ENCODE measurements at regions of chr12 and their contacts with region 1.

Region 1: DNA sequence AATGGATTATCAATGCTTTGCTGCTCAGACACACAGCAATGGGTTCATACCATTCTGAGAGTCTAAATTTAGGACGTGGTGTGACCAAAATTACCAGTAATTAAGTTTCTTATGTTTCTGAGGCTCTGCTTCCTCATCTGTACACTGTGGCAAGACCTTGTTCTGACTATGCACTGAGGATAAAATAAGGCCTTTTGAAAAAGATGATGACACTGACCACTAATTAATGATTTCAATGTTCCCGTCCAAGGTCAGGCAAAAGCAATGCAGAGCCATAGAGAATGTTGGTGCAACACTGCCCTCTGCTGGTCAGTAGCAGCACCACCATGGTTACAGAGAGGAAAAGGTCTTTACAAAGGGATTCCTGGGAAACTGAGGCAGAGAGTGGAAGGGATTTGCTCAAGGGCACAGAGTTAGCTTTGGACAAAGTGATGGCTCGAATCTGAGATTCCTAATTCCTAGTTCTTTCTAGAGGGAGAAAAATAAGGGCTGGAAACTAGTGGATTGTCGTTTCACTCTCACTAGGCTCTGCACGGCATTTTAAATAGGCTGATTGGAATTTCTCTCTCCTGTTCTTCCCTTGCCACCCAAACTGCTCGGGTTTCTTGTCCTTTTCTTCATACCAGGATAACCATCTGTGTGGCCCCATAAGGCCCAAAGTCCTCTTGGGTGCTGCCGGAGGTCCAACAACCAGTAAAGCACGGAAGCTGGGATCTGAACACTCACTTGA is 22.3 kb upstream of the P2RX7 start:
- DNase-seq: peak; percentile 31
- ATAC-seq: peak; percentile 89
- H3K4me3 Mint-ChIP-seq: no peak overlapping the region
- H3K27ac Mint-ChIP-seq: no peak overlapping the region
- H3K4me1 Mint-ChIP-seq: peaks cover 4% of the 10 kb centered on the region
- H3K27me3 Mint-ChIP-seq: no peaks in the 10 kb centered on the region
- CTCF ChIP-seq: peak; percentile 50

Region 2: DNA sequence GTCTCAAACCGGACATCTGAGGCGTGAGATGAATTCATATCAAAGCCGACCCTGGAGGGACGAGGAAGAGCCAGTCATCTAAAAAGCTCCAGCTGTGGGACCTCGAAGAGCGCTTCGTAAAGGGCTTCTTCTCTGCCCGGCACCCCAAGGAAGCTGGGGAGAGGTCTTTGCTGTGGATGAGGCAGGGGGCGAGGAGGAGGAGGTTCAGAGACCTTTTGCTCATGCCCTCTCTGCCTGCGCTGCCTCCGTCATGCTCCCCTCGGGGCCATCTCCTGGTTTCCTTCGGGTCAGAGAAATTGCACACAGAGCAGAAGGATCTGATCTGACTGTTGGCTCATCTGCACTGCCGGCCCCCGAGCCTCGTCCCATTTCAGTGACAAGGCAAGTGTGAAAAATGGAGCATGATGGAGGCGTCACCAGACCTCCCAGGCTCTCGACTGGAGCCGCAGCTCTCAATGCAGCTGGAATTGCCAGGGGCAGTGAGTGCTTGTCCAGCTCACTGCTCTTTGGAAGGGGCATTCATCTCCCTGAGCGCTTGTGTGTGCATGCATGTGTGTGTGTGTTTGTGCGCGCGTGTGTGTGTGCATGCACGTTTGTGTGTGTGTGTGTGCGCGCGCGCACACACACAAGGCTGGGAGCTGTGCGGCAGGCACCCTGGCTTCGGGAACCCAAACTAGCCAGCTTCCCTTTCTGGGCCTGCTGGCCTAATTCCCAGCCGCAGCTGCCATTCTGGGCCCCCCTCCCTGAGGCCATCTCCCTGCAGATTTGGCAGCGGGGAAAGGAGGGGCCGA is 460.7 kb before region 1 on chr12:
- CTCF ChIA-PET with region 1: no interaction called
- POLR2A ChIA-PET with region 1: no interaction called
- intact Hi-C with region 1: loop called (anchors 5 kb)
- DNase-seq: no peak
- ATAC-seq: no peak
- H3K4me3 Mint-ChIP-seq: peak overlapping the region; percentile 75
- H3K27ac Mint-ChIP-seq: peak overlapping the region; percentile 44
- H3K4me1 Mint-ChIP-seq: peaks cover 26% of the 10 kb centered on the region
- H3K27me3 Mint-ChIP-seq: peaks cover 48% of the 10 kb centered on the region
- CTCF ChIP-seq: peak; percentile 50

Region 3: DNA sequence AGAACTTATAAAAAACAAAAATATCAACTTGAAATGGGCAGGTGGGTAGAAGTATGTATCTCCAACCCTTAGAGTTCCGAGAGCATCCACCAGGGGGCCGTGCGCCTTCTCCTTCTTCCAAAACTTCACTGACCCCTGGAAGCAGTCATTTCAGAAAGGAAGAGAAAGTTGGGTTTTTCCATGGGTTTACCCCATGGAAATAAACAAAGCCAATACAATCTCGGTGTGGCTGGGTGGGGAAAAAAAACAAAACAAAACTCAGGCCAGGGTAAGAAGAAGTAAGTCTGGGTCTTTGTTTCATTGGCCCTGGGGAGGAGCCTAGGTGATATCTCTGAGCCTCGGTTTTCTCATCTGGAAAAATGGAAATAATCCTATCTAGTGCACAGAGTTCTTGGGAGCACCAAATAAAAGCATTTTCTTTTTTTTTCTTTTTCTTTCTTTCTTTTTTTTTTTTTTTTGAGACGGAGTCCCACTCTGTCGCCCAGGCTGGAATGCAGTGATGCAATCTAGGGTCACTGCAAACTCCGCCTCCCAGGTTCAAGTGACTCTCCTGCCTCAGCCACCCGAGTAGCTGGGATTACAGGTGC is 165.6 kb before region 1 on chr12:
- CTCF ChIA-PET with region 1: interaction called, 4 read pairs
- POLR2A ChIA-PET with region 1: no interaction called
- intact Hi-C with region 1: loop called (anchors 1 kb)
- DNase-seq: peak; percentile 36
- ATAC-seq: peak; percentile 47
- H3K4me3 Mint-ChIP-seq: no peak overlapping the region
- H3K27ac Mint-ChIP-seq: no peak overlapping the region
- H3K4me1 Mint-ChIP-seq: no peaks in the 10 kb centered on the region
- H3K27me3 Mint-ChIP-seq: no peaks in the 10 kb centered on the region
- CTCF ChIP-seq: no peak

Region 4: GRCh38 chr12:121209624-121210572 is 99.5 kb after region 1 on chr12 and contains the start of gene P2RX4:
- CTCF ChIA-PET with region 1: no interaction called
- POLR2A ChIA-PET with region 1: interaction called, 3 read pairs
- intact Hi-C with region 1: loop called (anchors 1 kb)
- DNase-seq: peak; percentile 80
- ATAC-seq: peak; percentile 85
- H3K4me3 Mint-ChIP-seq: peak within 1 kb of the TSS; percentile 83
- H3K27ac Mint-ChIP-seq: peak within 1 kb of the TSS; percentile 85
- H3K4me1 Mint-ChIP-seq: peaks cover 24% of the 10 kb centered on the region
- H3K27me3 Mint-ChIP-seq: no peaks in the 10 kb centered on the region
- CTCF ChIP-seq: no peak
- total RNA-seq, gene P2RX4: 17.0 and 19.5 TPM in 2 replicates

Region 5: DNA sequence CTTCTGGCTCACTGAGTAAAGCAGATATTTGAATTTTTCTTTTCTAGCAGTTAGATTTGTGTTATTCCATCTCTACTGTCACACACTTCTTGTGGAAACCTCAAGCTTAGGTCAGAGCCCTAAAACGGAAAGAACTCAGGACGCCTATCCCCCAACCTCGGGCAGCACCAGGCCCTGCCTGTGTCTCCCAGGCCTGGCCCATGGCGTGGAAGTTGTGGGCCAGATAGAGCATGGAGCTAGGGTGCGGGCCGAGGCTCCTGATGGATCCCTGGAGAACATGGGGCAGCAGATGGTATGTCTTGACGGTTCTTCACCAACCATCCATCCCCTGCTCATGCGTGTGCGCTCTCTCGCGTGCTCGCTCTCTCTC is 120.1 kb after region 1 on chr12:
- CTCF ChIA-PET with region 1: interaction called, 4 read pairs
- POLR2A ChIA-PET with region 1: no interaction called
- intact Hi-C with region 1: loop called (anchors 1 kb)
- DNase-seq: no peak
- ATAC-seq: no peak
- H3K4me3 Mint-ChIP-seq: no peak overlapping the region
- H3K27ac Mint-ChIP-seq: no peak overlapping the region
- H3K4me1 Mint-ChIP-seq: peaks cover 16% of the 10 kb centered on the region
- H3K27me3 Mint-ChIP-seq: no peaks in the 10 kb centered on the region
- CTCF ChIP-seq: no peak

Region 6: DNA sequence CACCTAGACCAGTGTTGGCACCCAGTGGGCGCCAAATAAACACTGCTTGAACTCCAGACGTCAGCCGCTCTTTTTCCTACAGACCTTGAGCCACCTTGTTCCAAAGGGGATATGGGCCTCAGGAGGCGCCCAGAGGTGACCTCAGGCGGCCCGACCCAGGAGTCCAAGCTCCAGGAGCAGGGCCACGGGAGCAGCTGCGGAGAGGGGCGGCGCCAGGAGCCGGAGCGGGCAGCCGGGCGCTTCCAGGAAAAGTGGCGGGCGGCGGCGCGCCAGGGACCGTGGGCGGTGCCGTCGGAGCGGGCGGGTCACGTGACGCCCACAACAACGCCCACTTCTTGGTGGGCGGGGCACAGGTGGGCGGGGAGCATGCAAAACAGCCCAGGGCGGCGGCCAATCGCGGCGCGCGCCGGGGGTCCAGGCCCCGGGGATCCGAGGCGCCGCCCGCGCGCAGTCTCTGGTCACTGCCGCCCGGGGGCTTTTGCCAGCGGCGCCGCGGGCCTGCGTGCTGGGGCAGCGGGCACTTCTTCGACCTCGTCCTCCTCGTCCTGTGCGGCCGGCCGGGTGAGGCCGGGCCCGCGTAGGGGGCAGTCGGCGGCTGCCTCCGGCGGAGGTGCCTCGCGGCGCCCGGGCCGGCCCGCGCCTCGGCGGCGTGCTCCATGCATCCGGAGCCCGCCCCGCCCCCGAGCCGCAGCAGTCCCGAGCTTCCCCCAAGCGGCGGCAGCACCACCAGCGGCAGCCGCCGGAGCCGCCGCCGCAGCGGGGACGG is 515.9 kb after region 1 on chr12 and contains the start of gene ORAI1:
- CTCF ChIA-PET with region 1: no interaction called
- POLR2A ChIA-PET with region 1: no interaction called
- intact Hi-C with region 1: no loop called
- DNase-seq: peak; percentile 98
- ATAC-seq: peak; percentile 70
- H3K4me3 Mint-ChIP-seq: peak within 1 kb of the TSS; percentile 94
- H3K27ac Mint-ChIP-seq: peak within 1 kb of the TSS; percentile 96
- H3K4me1 Mint-ChIP-seq: peaks cover 53% of the 10 kb centered on the region
- H3K27me3 Mint-ChIP-seq: no peaks in the 10 kb centered on the region
- CTCF ChIP-seq: no peak
- total RNA-seq, gene ORAI1: 85.8 and 86.3 TPM in 2 replicates

Measured in activated B cell treated with CpG ODN at 0.5 μM for 24 hours (primary cell).